ENCODE measurements at regions of chr6 and their contacts with region 1.

Region 1: GRCh38 chr6:42075159-42075838 is 25.0 kb downstream of the TAF8 start:
- DNase-seq: peak; percentile 87 to 88
- H3K4me3 ChIP-seq: no peak overlapping the region
- H3K27ac ChIP-seq: no peak overlapping the region
- H3K4me1 ChIP-seq: no peaks in the 10 kb centered on the region
- H3K27me3 ChIP-seq: no peaks in the 10 kb centered on the region
- CTCF ChIP-seq: peak in 5 of 7 experiments; percentile 61 to 88 (median 74)
- EP300 ChIP-seq: no peak
- POLR2A ChIP-seq: no peak

Region 2: DNA sequence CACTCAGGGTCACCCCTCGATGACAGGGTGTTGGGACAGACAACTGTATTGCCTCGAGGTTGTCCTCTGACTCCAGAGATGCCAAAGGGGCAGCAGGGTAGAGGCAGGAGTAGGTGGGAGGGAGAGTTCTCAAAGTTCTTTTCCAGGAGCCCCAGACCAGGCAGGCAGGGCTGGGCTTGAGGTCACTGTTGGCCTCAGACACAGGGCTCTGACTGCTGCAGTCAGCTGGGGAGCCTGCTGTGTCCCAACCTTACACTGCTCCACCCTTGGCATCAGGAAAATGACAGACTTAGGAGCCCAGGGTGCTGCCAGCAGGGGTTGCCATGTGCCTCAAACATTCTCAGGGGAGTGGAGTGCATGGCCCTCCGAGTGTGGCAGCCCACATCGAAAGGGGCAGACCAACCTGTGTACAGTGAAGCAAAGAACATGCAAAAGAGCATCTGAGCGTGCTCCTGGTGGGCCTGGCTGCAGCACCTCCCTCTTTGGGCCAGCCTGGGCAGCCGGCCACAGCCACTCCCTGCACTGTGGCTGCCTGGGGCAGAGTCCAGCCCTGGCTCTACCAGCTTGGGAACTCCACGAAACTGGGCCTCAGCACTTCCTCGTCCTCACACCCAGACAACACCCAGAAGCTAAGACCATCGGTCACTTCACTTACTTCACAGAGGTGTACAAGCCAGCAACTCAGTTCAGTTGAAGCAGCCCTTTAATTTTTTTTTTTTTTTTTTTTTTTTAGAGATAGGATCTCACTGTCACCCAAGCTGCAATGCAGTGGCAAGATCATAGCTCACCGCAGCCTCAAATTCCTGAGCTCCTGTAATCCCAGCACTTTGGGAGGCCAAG is 43.1 kb after region 1 on chr6:
- intact Hi-C with region 1: no loop called
- DNase-seq: peak; percentile 92
- H3K4me3 ChIP-seq: no peak overlapping the region
- H3K27ac ChIP-seq: peak overlapping the region; percentile 76 to 87 (median 85)
- H3K4me1 ChIP-seq: peaks cover 30 to 65% (median 52%) of the 10 kb centered on the region in 4 donors
- H3K27me3 ChIP-seq: no peaks in the 10 kb centered on the region
- CTCF ChIP-seq: no peak
- EP300 ChIP-seq: no peak
- POLR2A ChIP-seq: no peak

Region 3: DNA sequence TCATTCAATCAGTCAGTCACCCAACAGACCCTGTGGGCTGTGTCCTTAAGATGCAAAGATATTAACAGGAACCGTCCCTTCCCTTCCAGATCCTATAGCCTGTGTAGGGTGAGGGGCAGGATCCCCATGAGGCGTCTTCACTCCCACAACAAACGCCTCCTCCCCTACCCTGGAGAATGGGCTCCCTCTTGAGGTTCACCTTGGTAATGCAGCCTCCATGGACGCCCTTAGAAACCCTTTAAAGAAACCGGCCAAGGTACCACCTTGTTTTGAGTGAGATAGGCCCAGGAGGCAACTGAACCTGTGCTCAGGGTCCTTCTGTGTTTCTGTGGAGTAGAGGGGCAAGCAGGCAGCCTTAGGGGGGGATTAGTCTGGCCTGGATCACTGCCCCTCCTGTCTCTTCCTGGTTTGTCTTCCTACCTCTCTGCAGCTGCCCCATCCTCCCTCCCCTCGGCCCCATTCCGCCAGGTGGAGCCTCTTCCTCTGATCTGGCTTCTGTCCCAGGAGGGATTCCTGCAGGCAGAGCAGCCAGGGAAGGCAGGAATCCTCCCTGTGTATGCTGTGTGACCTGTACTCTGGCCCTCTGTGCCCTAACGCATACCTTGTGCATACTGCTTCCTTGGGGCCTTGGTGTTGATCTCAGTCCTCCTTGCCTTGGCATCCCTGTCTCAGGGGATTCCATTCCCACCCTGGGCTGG is 91.3 kb after region 1 on chr6:
- intact Hi-C with region 1: loop called (anchors 5 kb)
- DNase-seq: peak; percentile 76 to 86
- H3K4me3 ChIP-seq: no peak overlapping the region
- H3K27ac ChIP-seq: no peak overlapping the region
- H3K4me1 ChIP-seq: peaks cover 0 to 9% (median 0%) of the 10 kb centered on the region in 4 donors
- H3K27me3 ChIP-seq: no peaks in the 10 kb centered on the region
- CTCF ChIP-seq: peak in 5 of 7 experiments; percentile 92 to 98 (median 96)
- EP300 ChIP-seq: no peak
- POLR2A ChIP-seq: no peak

Measured in stomach (tissue), 19 donors.